ENCODE measurements at regions of chr12 and their contacts with region 1.

Region 1: DNA sequence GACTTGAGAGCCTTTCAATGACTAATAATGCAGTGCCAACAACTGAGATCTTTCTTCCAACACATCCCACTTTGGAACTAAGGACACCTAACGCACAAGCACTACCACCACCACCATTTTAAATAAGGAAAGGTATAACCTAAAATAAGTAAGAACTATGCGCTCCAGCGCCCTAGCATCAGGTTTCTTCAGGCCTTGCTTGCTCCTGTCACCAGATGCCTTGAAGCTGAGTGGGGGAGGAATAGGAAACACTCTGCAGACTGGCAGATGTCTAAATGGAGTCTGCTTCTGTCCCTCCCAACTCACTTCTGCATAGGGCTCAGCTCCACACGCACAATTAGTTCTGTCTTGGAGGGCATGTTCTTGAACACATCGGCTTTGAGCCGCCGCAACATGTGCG is 15.1 kb downstream of the CHD4 start:
- DNase-seq: no peak
- H3K4me3 ChIP-seq: no peak overlapping the region
- H3K27ac ChIP-seq: no peak overlapping the region
- H3K4me1 ChIP-seq: no peaks in the 10 kb centered on the region
- H3K27me3 ChIP-seq: no peaks in the 10 kb centered on the region
- CTCF ChIP-seq: no peak

Region 2: DNA sequence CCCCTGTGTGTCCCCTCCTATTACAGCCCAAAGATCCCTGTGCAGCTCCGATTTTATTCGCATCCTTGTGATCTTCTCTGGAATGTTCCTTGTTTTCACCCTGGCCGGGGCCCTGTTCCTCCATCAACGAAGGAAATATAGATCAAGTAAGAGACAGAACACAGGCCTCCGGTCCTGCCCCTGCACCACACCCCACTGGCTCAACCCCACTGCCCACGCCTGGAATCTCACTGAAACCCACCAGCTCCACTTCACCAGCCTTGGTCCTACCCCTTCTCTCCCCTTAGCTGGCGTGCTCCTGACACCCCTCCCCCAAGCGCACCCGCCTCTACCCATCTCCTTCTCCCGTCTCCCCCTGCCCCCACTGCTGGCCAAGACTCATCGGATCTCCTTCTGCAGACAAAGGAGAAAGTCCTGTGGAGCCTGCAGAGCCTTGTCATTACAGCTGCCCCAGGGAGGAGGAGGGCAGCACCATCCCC is 141.2 kb before region 1 on chr12:
- CTCF ChIA-PET with region 1: no interaction called
- dilution Hi-C with region 1: no loop called
- in situ Hi-C with region 1: no loop called
- intact Hi-C with region 1: no loop called
- DNase-seq: no peak
- H3K4me3 ChIP-seq: peak overlapping the region; percentile 44 to 80 (median 61)
- H3K27ac ChIP-seq: peak overlapping the region; percentile 71
- H3K4me1 ChIP-seq: peaks cover 23% of the 10 kb centered on the region
- H3K27me3 ChIP-seq: no peaks in the 10 kb centered on the region
- CTCF ChIP-seq: no peak

Region 3: GRCh38 chr12:6644903-6645302 is 52.8 kb after region 1 on chr12:
- CTCF ChIA-PET with region 1: no interaction called
- dilution Hi-C with region 1: loop called (anchors 5 kb)
- in situ Hi-C with region 1: no loop called
- intact Hi-C with region 1: no loop called
- DNase-seq: no peak
- H3K4me3 ChIP-seq: no peak overlapping the region
- H3K27ac ChIP-seq: no peak overlapping the region
- H3K4me1 ChIP-seq: no peaks in the 10 kb centered on the region
- H3K27me3 ChIP-seq: no peaks in the 10 kb centered on the region
- CTCF ChIP-seq: no peak

Region 4: GRCh38 chr12:6697584-6698351 is 105.7 kb after region 1 on chr12:
- CTCF ChIA-PET with region 1: no interaction called
- dilution Hi-C with region 1: no loop called
- in situ Hi-C with region 1: no loop called
- intact Hi-C with region 1: no loop called
- DNase-seq: peak; percentile 48
- H3K4me3 ChIP-seq: no peak overlapping the region
- H3K27ac ChIP-seq: no peak overlapping the region
- H3K4me1 ChIP-seq: peaks cover 4% of the 10 kb centered on the region
- H3K27me3 ChIP-seq: peaks cover 21% of the 10 kb centered on the region
- CTCF ChIP-seq: peak; percentile 55 to 57